Astrocyte of the cerebellum (primary cell): ENCODE measurements at regions of chr6 and their contacts with region 1.

Region 1: DNA sequence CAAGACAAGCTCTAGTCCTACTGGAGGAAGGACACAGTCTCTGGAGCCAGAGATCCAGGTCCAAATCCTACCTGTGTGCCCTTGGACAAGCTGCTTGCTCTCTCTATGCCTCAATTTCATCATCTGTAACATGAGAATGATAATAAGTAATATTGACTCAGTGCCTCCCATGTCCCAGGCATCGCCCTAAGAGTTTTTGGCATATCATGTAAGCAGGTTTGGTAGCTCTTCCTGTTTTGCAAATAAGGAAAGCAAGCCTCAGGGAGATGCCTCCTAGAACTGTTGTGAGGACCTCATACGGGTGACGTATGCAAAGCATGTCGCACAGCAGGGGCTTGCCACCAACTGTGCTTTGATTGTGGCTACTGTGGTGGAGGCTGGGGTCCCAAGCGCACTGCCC is 61.8 kb upstream of the LRFN2 start:
- DNase-seq: no peak
- H3K4me3 ChIP-seq: no peak overlapping the region
- CTCF ChIP-seq: no peak

Region 2: DNA sequence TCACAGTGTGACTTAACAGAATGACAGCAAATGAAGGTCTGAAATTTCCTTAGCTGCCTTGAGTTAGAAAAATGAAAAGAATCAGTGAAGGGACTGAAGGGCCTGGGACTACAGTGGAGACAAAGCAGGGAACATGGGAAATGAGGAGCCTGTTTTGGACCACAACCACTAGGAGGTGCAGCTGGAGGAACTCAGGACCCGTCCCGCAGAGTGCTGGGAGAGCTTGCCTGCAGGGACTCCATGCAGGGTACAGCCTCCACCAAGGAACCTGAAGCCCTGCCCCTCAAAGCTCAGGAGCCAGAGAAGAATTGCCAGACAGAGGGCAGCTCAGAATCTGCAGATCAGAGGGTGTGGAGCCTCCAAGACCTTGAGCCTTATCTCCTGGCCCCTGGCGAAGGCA is 112.5 kb before region 1 on chr6:
- in situ Hi-C with region 1: no loop called
- DNase-seq: no peak
- H3K4me3 ChIP-seq: no peak overlapping the region
- CTCF ChIP-seq: no peak

Region 3: DNA sequence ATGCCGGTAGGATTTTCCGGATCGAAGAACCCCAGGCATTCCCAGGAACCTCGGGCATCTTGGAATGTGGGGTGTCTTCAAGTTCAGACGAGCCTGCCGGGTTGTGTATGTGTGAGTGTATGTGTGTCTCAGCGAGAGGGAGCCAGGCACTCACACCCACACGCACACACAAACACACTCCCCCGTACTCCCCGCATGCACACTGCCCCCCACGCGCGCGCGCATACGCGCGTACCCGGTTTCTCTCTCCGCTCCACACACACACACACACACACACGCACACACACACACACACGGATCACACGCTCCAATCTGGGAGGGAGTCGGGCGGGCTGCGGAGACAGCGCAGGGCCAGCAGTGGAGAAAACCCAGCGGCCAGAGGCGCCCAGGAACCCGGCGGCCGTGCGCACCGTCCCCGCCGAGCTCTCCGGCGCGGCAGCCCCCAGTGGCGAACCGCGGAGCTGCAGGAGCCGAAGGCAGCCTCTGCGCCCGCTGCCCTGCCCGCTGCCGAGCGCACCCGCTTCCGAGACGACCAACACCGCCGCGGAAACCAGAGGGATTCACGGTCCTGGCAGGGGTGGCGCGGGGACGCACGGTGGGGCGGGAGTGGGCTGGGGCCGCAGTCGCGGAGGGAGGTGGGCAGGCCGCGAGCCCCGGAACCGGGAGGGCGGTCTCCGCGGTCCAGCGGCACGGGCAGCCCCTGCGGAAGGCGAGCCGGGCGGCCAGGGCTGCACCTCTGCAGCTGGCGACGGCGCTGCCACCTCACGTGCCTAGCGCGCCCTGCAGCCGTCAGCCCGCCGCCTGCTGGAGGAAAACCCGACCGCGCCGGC is 61.5 kb before region 1 on chr6 and contains the start of gene LRFN2:
- in situ Hi-C with region 1: no loop called
- DNase-seq: peak; percentile 15
- H3K4me3 ChIP-seq: peak within 1 kb of the TSS; percentile 36
- CTCF ChIP-seq: peak; percentile 61

Region 4: GRCh38 chr6:40611912-40612311 is 37.0 kb before region 1 on chr6:
- in situ Hi-C with region 1: loop called (anchors 5 kb)
- DNase-seq: no peak
- H3K4me3 ChIP-seq: no peak overlapping the region
- CTCF ChIP-seq: no peak

Region 5: DNA sequence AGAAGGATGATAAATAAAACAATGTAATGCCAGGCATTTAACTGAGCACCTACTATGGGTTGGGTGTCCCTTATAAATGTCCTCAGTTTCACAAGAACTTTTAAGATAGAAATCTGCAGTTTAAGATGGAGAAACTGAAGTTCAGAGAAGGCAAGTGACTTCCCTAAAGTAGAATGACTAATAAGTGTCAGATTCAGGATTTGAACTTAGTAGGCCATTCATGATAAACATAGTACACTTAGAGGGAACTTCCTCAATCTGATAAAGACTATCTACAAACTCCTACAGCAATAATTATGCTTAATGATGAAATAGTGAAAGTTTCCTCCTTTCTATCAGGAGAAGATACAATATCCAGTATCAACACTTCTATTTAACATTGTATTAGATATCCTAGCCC is 730.4 kb after region 1 on chr6:
- in situ Hi-C with region 1: no loop called
- DNase-seq: no peak
- H3K4me3 ChIP-seq: no peak overlapping the region
- CTCF ChIP-seq: no peak